ENCODE measurements at regions of chr11 and their contacts with region 1.

Region 1: DNA sequence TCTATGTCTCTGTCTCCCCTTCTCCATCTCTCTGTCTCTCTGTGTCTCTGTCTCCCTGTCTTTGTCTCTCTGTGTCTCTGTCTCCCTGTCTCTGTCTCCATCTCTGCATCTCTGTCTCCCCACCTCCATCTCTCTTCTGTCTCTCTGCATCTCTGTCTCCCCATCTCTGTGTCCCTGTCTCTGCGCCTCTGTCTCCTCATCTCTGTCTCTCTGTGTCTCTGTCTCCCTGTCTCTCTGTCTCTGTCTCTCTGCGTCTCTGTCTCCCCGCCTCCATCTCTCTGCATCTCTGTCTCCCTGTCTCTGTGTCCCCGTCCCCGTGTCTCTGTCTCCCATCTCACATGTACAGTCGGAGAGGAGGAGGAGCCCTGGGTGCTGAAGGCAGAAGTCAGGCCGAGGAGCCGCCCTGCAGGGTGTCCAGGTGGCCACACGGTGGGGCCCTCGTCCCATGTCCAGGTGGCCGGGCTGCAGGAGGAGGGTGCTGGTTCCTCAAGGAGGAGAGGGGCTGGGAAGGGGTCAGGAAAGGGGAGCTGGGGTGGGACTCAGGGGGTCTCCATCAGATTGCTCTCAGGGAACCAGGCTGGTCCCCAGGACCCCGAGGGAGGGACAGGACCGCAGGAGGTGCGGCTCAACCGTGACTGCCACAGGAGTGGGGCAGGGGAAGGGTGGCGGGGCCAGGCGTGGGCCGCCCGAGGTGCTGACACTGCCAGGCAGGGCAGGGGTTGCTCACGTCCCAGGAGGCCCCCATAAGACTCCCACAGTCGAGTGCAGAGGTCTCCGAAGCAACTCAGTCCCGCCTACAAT is 25.6 kb upstream of the TH start:
- DNase-seq: peak; percentile 92

Region 2: DNA sequence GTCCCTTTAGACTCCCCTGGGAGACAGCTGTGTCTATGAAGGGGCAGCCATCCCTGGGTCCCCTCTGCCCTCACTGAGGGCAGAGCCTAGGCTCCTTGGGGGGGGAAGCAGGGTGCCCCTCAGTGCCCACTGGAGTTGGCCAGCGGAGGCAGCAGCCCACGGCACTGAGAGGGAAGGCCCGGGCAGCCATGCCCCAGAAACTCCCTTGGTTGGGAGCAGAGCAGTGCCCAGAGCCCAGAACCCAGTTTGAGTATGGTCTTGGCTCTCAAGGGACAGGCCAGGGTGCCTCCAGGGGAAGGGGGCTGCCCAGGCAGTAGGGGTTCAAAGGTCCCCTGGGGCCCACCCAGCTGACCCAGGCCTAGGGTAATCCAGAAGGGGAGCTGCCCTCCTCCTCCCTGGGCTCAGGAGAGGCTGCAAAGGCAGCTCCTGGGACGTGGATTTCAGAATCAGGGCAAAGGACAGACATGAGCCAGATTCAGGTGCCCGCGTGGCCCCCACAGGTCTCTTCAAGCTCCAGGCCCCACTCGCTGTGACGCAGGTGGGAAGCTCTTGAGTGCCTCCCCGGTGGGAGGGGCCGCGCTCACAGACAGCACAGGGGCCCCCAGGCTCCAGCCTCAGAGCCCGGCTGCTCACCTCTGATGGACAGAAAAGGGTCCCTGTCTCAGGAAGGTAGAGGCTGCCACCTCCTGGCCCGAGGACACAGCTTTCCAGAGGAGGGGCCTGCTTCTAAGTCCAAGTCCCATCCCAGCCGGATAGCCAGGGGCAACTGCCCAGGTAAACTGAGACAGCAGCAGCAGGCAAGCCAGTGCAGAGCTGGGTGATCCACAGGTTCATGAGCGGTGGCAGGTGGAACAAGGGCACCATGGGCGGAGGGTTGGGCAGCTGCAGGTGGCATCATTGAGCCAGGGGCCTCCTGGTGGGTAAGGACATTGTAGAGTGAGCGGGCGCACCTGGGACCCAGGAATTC is 101.9 kb after region 1 on chr11:
- intact Hi-C with region 1: loop called (anchors 5 to 10 kb)
- DNase-seq: peak; percentile 66

Region 3: GRCh38 chr11:2420502-2421225 is 223.5 kb after region 1 on chr11:
- intact Hi-C with region 1: loop called (anchors 2 kb)
- DNase-seq: peak; percentile 93

Measured in posterior vena cava (tissue), 2 donors.